ENCODE measurements at regions of chr16 and their contacts with region 1.

Region 1: DNA sequence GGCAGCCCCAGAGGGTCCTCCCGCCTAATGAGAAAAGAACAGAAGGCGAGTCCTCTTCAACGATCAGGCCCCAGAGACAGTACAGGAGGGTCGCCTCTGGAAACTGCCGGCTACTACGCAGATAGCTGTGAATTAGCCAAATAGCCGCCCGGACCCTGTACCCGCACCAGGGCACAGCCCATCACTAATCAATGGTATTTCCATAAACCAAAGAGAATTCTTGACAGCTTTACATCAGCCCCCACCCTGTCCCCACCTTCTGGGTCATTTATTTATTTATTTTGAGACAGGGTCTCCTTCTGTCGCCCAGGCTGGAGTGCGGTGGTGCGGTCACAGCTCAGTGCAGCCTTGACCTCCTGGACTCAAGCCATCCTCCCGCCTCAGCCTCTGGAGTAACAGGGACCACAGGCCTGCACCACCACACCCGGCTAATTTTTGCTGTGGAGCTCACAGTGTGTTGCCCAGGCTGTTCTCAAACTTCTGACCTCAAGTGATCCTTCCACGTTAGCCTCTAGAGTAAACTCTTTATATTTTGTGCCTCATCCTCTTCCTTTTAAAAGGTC is 805 bp upstream of the CLCN7 start:
- DNase-seq: no peak
- H3K4me3 ChIP-seq: peak overlapping the region; percentile 70 to 97 (median 95)
- H3K27ac ChIP-seq: peak overlapping the region; percentile 92 to 97
- H3K4me1 ChIP-seq: no peaks in the 10 kb centered on the region
- H3K27me3 ChIP-seq: no peaks in the 10 kb centered on the region
- CTCF ChIP-seq: no peak
- POLR2A ChIP-seq: no peak

Region 2: GRCh38 chr16:1069154-1069553 is 406.5 kb before region 1 on chr16:
- intact Hi-C with region 1: no loop called
- DNase-seq: no peak
- H3K4me3 ChIP-seq: no peak overlapping the region
- H3K27ac ChIP-seq: no peak overlapping the region
- H3K4me1 ChIP-seq: no peaks in the 10 kb centered on the region
- H3K27me3 ChIP-seq: peaks cover 2 to 100% of the 10 kb centered on the region in 2 donors
- CTCF ChIP-seq: no peak
- POLR2A ChIP-seq: no peak

Region 3: DNA sequence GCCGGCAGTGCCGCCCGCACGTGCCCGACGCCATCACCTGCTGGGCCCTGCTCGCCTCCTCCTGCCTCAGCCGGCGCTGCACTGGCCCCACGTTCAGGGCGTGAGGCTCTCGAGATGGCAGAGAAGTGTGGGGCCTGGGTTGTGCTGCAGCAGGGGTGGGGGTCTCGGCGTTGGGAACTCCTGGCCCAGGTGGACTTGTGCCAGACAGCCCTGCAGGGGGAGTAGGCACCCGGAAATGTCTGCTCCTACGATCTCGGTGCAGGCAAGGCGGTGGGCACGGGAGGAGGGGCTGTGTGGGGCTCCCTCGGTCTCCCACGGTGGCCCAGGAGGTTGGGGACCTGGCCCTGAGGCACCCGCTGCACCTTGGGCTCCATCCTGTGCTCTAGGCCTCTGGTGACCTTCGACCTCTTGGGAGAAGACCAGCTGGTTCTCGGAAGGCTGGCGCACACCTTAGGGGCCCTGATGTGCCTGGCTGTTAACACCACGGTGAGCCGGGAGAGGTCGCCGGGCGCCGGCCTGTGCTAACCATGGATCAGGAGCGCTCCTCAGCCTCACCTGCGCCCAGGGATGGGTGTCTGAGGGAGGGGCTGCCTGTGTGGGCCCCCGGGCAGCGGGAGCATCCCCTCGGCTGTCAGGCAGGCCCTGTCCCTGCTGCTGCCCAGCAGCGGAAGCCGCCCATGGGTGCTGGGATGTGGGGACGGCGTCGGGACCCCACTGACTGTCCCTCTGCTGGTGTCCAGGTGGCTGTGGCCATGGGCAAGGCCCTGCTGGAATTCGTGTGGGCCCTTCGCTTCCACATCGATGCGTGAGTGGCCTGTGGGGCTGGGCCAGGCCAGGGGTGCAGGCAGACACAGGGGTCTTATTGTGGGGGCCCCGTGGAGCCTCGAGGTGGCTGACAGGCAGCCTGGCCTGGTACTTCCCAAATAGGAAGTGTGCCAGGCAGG is 31.2 kb after region 1 on chr16:
- intact Hi-C with region 1: loop called (anchors 1 kb)
- DNase-seq: no peak
- H3K4me3 ChIP-seq: no peak overlapping the region
- H3K27ac ChIP-seq: no peak overlapping the region
- H3K4me1 ChIP-seq: no peaks in the 10 kb centered on the region
- H3K27me3 ChIP-seq: no peaks in the 10 kb centered on the region
- CTCF ChIP-seq: no peak
- POLR2A ChIP-seq: no peak

Measured in breast epithelium (tissue), 4 donors.